CD4-positive, alpha-beta T cell (primary cell): ENCODE measurements at regions of chr17 and their contacts with region 1.

Region 1: DNA sequence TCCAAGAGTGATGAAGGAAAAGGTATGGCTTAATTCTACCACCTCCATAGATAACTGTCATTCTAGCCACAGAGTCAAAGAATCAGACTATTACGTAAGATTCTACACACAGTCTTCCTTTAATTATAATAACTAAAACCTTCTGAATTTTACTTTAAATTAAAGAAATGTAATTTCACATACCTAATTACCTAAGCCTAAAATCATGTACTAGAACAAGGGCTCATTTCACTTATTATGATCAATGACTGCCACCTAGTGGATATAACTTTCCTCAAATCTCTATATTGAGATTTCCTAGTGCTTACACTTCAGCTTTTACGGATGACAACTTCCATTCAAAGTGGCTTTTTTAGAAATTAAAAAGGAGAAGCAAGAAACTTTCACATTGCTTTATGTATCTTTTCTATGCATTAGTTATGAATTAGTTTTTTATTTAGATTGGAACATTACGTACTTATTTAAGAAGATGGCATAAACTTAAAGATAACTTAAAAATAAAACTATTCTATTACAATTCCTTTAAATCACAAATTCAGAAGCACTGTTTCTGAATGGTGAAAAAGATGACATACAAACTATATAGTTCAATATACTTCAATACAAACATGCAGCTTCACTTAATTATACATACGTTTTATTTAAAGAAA is 18.2 kb upstream of the ABCA10 start:
- DNase-seq: peak in 3 of 14 experiments; percentile 40 to 58 (median 46)
- ATAC-seq: no peak
- H3K4me3 ChIP-seq: no peak overlapping the region
- H3K4me3 Mint-ChIP-seq: no peak overlapping the region
- H3K27ac ChIP-seq: no peak overlapping the region
- H3K27ac Mint-ChIP-seq: no peak overlapping the region
- H3K4me1 ChIP-seq: no peaks in the 10 kb centered on the region
- H3K4me1 Mint-ChIP-seq: no peaks in the 10 kb centered on the region
- H3K27me3 ChIP-seq: no peaks in the 10 kb centered on the region
- H3K27me3 Mint-ChIP-seq: no peaks in the 10 kb centered on the region
- CTCF ChIP-seq: peak; percentile 85

Region 2: GRCh38 chr17:68539548-68540467 is 707.0 kb before region 1 on chr17:
- CTCF ChIA-PET with region 1: no interaction called
- POLR2A ChIA-PET with region 1: no interaction called
- intact Hi-C with region 1: loop called in 1 of 2 experiments (anchors 5 kb)
- DNase-seq: peak in 1 of 14 experiments; percentile 10
- ATAC-seq: no peak
- H3K4me3 ChIP-seq: no peak overlapping the region
- H3K4me3 Mint-ChIP-seq: no peak overlapping the region
- H3K27ac ChIP-seq: no peak overlapping the region
- H3K27ac Mint-ChIP-seq: no peak overlapping the region
- H3K4me1 ChIP-seq: no peaks in the 10 kb centered on the region
- H3K4me1 Mint-ChIP-seq: no peaks in the 10 kb centered on the region
- H3K27me3 ChIP-seq: no peaks in the 10 kb centered on the region
- H3K27me3 Mint-ChIP-seq: no peaks in the 10 kb centered on the region
- CTCF ChIP-seq: no peak

Region 3: DNA sequence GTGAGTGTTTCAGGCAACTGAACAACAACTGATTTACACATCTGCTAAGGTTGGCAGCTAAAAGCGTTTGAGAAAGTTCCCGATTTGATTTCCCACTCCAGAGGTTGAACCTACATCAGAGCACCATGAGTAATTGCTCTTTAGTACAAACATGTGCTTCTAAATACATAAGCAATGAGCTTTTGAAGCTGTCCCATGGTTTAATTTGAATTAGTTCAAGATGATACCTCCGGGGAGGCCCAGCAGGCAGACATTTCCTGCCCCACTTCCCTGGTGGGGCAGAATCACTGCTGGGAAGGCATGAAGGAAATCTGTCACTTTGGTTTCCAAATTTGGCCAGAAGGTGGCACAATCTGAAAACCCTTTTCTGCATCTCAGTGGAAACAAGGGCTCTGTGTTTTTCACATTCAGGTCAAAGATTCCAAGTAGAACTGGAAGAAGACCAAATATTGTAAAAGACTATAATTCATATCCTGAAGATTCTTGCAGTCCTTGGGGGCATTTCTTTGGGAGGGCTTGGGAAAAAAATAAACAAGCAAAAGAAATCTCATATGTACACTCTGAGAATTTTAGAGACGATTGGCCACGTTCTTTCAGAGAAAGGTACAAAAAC is 469.5 kb before region 1 on chr17:
- CTCF ChIA-PET with region 1: no interaction called
- POLR2A ChIA-PET with region 1: no interaction called
- intact Hi-C with region 1: loop called (anchors 1 to 2 kb)
- DNase-seq: peak in 4 of 14 experiments; percentile 26 to 53 (median 38)
- ATAC-seq: no peak
- H3K4me3 ChIP-seq: no peak overlapping the region
- H3K4me3 Mint-ChIP-seq: no peak overlapping the region
- H3K27ac ChIP-seq: no peak overlapping the region
- H3K27ac Mint-ChIP-seq: no peak overlapping the region
- H3K4me1 ChIP-seq: no peaks in the 10 kb centered on the region
- H3K4me1 Mint-ChIP-seq: no peaks in the 10 kb centered on the region
- H3K27me3 ChIP-seq: no peaks in the 10 kb centered on the region
- H3K27me3 Mint-ChIP-seq: peaks cover 8% of the 10 kb centered on the region
- CTCF ChIP-seq: peak; percentile 57

Region 4: GRCh38 chr17:69235338-69235930 is 11.4 kb before region 1 on chr17:
- CTCF ChIA-PET with region 1: no interaction called
- POLR2A ChIA-PET with region 1: no interaction called
- intact Hi-C with region 1: no loop called
- DNase-seq: peak; percentile 6 to 73 (median 30)
- ATAC-seq: peak; percentile 46
- H3K4me3 ChIP-seq: no peak overlapping the region
- H3K4me3 Mint-ChIP-seq: no peak overlapping the region
- H3K27ac ChIP-seq: no peak overlapping the region
- H3K27ac Mint-ChIP-seq: no peak overlapping the region
- H3K4me1 ChIP-seq: no peaks in the 10 kb centered on the region
- H3K4me1 Mint-ChIP-seq: no peaks in the 10 kb centered on the region
- H3K27me3 ChIP-seq: no peaks in the 10 kb centered on the region
- H3K27me3 Mint-ChIP-seq: no peaks in the 10 kb centered on the region
- CTCF ChIP-seq: peak; percentile 47

Region 5: DNA sequence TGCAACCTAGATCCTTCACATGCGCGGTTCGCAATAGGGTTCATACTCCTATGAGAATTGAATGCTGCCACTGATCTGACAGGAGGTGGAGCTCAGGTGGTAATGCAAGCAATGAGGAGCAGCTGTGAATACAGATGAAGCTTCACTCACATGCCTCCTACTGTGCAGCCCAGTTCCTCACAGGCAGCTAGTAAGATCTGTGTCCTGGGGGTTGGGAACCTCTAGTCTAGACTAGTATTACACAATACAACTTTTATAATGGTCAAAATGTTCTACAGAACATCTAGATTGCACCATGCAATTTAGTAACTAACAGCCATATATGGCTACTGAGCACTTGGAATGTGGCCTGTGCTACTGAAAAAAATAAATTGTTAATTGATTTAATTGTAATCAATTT is 53.4 kb after region 1 on chr17:
- CTCF ChIA-PET with region 1: no interaction called
- POLR2A ChIA-PET with region 1: no interaction called
- intact Hi-C with region 1: loop called in 1 of 2 experiments (anchors 5 kb)
- DNase-seq: no peak
- ATAC-seq: no peak
- H3K4me3 ChIP-seq: no peak overlapping the region
- H3K4me3 Mint-ChIP-seq: no peak overlapping the region
- H3K27ac ChIP-seq: no peak overlapping the region
- H3K27ac Mint-ChIP-seq: no peak overlapping the region
- H3K4me1 ChIP-seq: no peaks in the 10 kb centered on the region
- H3K4me1 Mint-ChIP-seq: no peaks in the 10 kb centered on the region
- H3K27me3 ChIP-seq: no peaks in the 10 kb centered on the region
- H3K27me3 Mint-ChIP-seq: no peaks in the 10 kb centered on the region
- CTCF ChIP-seq: no peak

Region 6: DNA sequence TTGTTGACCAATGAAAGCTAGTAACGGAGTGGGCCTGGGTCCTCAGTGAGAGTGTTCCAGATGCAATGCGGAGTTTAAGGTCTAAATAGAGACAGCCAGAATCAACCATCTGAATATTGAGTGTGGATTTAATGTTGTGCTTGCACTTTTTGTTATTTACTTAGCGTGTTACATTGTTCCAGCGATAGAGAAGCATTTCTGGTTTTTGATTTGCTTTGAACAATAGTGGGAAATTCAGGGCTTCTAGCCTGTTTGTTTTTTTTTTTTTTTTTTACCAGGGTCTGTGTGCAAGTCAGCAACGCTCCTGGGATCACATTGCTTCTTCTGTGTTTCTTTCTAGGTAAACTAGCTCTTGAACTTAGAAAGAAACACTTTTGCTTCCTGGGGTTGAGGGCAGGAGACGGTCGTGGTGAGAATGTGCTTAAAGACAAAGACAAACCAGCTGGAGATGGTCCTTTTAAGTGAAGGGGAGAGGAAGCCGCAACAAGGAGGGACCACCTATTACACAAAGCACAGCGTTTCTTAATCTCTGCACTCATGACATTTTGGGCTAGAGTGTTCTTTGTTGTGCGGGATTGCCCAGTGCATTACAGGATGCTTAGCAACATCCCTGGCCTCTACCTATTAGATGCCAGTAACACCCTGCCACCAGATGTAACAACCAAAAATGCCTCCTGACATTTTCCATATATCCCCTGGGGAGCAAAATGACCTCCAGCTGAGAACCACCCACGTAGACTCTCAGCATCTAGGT is 286.8 kb after region 1 on chr17:
- CTCF ChIA-PET with region 1: no interaction called
- POLR2A ChIA-PET with region 1: no interaction called
- intact Hi-C with region 1: no loop called
- DNase-seq: no peak
- ATAC-seq: no peak
- H3K4me3 ChIP-seq: no peak overlapping the region
- H3K4me3 Mint-ChIP-seq: no peak overlapping the region
- H3K27ac ChIP-seq: no peak overlapping the region
- H3K27ac Mint-ChIP-seq: no peak overlapping the region
- H3K4me1 ChIP-seq: no peaks in the 10 kb centered on the region
- H3K4me1 Mint-ChIP-seq: no peaks in the 10 kb centered on the region
- H3K27me3 ChIP-seq: no peaks in the 10 kb centered on the region
- H3K27me3 Mint-ChIP-seq: no peaks in the 10 kb centered on the region
- CTCF ChIP-seq: no peak